ENCODE measurements at regions of chr4 and their contacts with region 1.

Region 1: DNA sequence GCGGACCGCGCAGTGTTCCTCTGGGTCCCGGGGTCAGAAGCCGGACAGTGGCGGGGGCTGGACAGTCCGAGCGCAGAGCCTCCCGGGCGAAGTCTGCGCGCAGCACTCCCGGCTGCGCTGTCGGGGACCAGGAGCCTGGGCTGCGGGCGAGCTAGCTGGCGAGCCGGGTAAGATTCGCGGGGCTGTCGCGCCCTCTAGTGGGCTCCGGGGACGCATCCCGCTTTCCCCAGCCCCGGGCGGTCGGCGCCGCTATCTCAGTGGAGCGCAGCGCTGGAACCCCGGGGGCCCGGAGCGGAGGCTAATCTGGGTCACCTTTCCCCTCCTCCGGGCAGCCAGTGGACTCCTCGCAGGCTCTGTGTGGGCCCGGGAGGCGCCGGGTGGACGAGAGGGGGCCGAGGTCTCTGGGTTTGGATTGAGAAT is 4.2 kb downstream of the PDGFRA start:
- DNase-seq: peak; percentile 81 to 88
- ATAC-seq: peak; percentile 82 to 95 (median 88)
- H3K4me3 ChIP-seq: peak overlapping the region; percentile 26 to 65 (median 61)
- H3K27ac ChIP-seq: peak overlapping the region; percentile 19 to 85 (median 70)
- H3K4me1 ChIP-seq: peaks cover 4 to 67% (median 49%) of the 10 kb centered on the region in 9 donors
- H3K27me3 ChIP-seq: peaks cover 20 to 55% (median 46%) of the 10 kb centered on the region in 7 donors
- CTCF ChIP-seq: peak; percentile 73 to 90 (median 81)

Region 2: DNA sequence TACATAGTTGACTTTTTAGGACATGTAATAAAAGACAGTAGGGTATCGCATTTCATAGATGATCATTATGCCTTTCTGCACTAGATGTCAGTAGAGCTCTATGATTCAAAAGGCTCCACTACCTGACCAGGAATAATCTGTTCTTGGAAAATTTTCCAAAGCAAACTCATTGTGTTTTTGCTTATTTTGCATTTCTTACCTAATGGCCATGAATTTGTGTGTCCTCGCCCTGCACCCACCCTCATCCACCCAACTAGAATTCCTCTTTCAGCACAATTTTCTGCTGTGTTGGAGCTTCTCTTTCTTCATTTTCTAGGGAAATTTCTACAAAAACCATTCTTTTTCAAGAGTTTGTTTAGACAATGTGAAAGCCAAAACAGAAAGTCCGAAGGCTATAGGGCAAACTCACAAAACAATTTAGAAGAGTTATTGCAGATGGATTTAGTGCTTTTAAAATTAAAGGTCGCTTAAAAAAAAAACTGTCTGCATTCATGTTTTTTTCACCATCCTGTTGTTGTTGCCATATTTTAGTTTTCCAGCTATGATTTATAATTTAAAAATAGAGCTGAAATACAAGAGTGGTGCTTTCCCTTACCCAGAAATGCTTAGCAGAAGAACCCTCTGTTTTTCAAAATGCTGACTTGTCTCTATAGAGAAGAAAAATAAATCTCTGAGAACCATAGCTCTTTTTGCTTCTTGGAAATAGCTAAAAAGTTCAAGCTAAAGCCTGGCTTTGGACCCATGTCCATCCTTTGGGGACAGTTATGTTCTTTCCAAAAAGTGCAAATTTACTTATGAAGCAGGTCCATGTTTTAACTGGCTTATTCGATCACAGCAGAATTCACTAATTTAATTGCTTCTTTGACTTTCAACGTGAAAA is 1998.5 kb before region 1 on chr4:
- intact Hi-C with region 1: loop called in 4 of 10 experiments (anchors 5 to 10 kb)
- DNase-seq: no peak
- ATAC-seq: peak in 7 of 8 donors; percentile 73 to 87 (median 80)
- H3K4me3 ChIP-seq: no peak overlapping the region
- H3K27ac ChIP-seq: peak overlapping the region in 1 of 10 donors; percentile 29
- H3K4me1 ChIP-seq: peaks cover 0 to 8% (median 0%) of the 10 kb centered on the region in 9 donors
- H3K27me3 ChIP-seq: peaks cover 0 to 6% (median 0%) of the 10 kb centered on the region in 7 donors
- CTCF ChIP-seq: peak; percentile 20 to 76 (median 64)

Region 3: DNA sequence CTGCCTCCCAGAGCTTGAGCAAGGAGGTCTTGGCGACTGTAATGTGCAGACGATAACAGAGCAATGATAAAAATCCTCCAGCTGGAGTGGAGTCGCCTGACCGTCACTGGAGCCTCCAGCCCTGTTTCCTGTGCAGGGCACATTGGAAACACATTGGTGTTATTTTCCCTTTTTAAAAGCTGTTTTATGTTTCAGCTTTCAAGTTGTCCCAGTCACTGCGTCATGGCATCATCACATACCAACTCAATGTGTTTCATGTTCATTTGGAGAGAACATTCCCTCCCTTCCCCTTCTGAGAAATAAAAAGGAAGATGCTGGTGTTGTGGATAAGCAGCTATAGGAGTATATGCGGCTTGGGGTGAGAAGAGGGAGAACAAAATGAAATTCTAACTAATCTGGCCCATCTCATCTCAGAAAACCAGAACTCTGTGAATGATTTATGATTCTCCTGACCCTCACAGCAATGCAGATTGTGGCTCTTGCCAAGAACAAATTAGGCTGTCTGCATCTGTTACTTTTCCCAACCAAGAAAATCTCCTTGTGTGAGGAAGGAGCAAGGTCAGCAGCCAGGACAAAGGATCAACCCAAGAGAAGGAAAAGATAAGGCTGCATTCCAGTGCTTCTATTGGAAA is 1236.9 kb before region 1 on chr4:
- intact Hi-C with region 1: loop called in 1 of 10 experiments (anchors 5 kb)
- DNase-seq: peak; percentile 19 to 21
- ATAC-seq: peak; percentile 53 to 84 (median 67)
- H3K4me3 ChIP-seq: no peak overlapping the region
- H3K27ac ChIP-seq: peak overlapping the region in 9 of 10 donors; percentile 20 to 82 (median 62)
- H3K4me1 ChIP-seq: peaks cover 19 to 49% (median 41%) of the 10 kb centered on the region in 9 donors
- H3K27me3 ChIP-seq: no peaks in the 10 kb centered on the region
- CTCF ChIP-seq: no peak

Region 4: GRCh38 chr4:53196882-53197771 is 1036.2 kb before region 1 on chr4:
- intact Hi-C with region 1: loop called in 8 of 10 experiments (anchors 2 to 5 kb)
- DNase-seq: no peak
- ATAC-seq: peak in 6 of 8 donors; percentile 56 to 75 (median 61)
- H3K4me3 ChIP-seq: no peak overlapping the region
- H3K27ac ChIP-seq: peak overlapping the region in 1 of 10 donors; percentile 37
- H3K4me1 ChIP-seq: peaks cover 0 to 16% (median 4%) of the 10 kb centered on the region in 9 donors
- H3K27me3 ChIP-seq: no peaks in the 10 kb centered on the region
- CTCF ChIP-seq: peak; percentile 65 to 85 (median 79)

Region 5: GRCh38 chr4:53490965-53491622 is 742.2 kb before region 1 on chr4:
- intact Hi-C with region 1: loop called in 4 of 10 experiments (anchors 10 kb)
- DNase-seq: peak in 1 of 2 donors; percentile 30
- ATAC-seq: peak in 6 of 8 donors; percentile 42 to 72 (median 52)
- H3K4me3 ChIP-seq: no peak overlapping the region
- H3K27ac ChIP-seq: peak overlapping the region in 4 of 10 donors; percentile 12 to 65 (median 25)
- H3K4me1 ChIP-seq: peaks cover 0 to 16% (median 8%) of the 10 kb centered on the region in 9 donors
- H3K27me3 ChIP-seq: peaks cover 0 to 5% (median 0%) of the 10 kb centered on the region in 7 donors
- CTCF ChIP-seq: peak; percentile 37 to 78 (median 71)

Region 6: DNA sequence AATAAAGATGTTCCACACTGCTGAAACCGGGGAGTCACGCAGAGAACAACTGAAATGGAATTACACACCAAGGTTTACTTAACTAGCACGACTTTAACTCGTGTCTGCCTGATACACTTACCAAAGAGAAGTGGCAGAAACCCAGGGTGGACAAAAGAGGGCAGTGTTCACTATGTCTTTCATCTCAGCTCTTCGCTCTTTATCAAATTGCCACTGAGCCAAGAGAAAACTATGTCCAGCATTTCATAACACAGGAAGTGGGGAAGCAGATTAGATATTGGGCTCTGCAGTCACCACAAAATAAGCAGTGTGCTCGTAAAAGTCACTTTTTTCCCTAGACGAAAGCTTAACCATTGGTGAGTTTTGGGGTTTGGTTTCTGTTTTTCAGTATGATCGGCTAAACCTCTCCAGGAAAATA is 324.6 kb before region 1 on chr4:
- intact Hi-C with region 1: loop called in 6 of 10 experiments (anchors 5 to 10 kb)
- DNase-seq: peak in 1 of 2 donors; percentile 59
- ATAC-seq: peak; percentile 80 to 93 (median 91)
- H3K4me3 ChIP-seq: peak overlapping the region in 7 of 10 donors; percentile 8 to 30 (median 23)
- H3K27ac ChIP-seq: peak overlapping the region in 7 of 10 donors; percentile 10 to 66 (median 51)
- H3K4me1 ChIP-seq: peaks cover 4 to 39% (median 26%) of the 10 kb centered on the region in 9 donors
- H3K27me3 ChIP-seq: peaks cover 0 to 52% (median 27%) of the 10 kb centered on the region in 7 donors
- CTCF ChIP-seq: peak; percentile 7 to 89 (median 74)

Measured in heart right ventricle (tissue), 16 donors.